ENCODE measurements at regions of chr1 and their contacts with region 1.

Region 1: GRCh38 chr1:160646711-160647328 is at the start of gene SLAMF1:
- DNase-seq: peak; percentile 45 to 74 (median 51)
- H3K4me3 ChIP-seq: peak within 1 kb of the TSS; percentile 80 to 97
- H3K4me3 Mint-ChIP-seq: peak within 1 kb of the TSS; percentile 98 to 100 (median 99)
- H3K27ac ChIP-seq: peak within 1 kb of the TSS; percentile 88
- H3K27ac Mint-ChIP-seq: peak within 1 kb of the TSS; percentile 87 to 98 (median 97)
- H3K4me1 ChIP-seq: peaks cover 55% of the 10 kb centered on the region
- H3K4me1 Mint-ChIP-seq: peaks cover 47 to 94% (median 61%) of the 10 kb centered on the region in 4 donors
- H3K27me3 ChIP-seq: no peaks in the 10 kb centered on the region
- H3K27me3 Mint-ChIP-seq: no peaks in the 10 kb centered on the region
- total RNA-seq, gene SLAMF1: 59.8 to 59.9 TPM

Region 2: DNA sequence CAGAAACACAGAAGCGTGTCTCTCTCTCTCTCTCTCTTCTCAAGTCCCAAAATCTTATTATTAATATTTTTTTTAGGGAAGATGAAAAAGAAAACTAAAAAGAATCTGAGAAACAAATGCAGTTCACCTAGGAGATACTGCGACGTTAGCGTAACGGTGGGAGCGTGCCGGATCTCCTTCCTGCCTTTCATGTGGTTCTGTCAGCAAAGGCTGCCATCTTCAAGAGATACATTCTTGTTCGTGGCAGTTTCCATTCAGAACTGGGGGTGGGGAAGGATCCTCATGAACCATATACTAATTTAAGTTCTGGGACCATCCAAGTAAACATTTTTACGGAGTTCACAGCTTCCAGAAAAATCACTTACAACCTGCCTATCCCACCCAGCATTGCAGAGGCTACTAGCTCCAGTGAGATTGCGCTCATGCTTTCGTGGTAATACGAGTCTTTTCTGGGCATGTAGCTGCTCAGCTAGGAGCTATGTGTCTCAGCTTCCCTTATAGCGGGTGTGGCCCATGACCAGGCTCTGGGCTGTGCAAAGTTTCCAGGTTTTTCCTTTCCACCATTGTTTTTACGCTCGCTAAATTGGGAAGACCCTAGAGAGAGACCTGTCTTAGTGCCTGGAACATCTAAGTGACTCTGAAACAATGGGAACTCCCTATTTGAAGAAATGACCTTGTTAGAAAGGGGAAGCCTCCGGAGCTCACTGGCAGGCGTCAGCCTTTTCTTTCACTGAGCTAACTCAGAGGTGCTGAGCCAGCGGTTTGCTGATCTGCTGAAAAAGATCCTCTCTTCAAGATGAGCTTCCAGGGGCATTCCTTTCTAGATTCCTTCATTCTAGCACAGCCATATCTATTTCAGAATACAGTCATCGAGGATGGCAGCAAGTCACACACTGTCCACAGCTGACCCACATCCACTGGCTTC is 17.3 kb before region 1 on chr1:
- CTCF ChIA-PET with region 1: interaction called, 44 read pairs
- POLR2A ChIA-PET with region 1: interaction called, 135 read pairs
- intact Hi-C with region 1: loop called (anchors 2 kb)
- DNase-seq: peak; percentile 88 to 94 (median 91)
- H3K4me3 ChIP-seq: peak overlapping the region; percentile 18 to 36
- H3K4me3 Mint-ChIP-seq: peak overlapping the region; percentile 80 to 91 (median 84)
- H3K27ac ChIP-seq: peak overlapping the region; percentile 93
- H3K27ac Mint-ChIP-seq: peak overlapping the region; percentile 87 to 100 (median 99)
- H3K4me1 ChIP-seq: peaks cover 98% of the 10 kb centered on the region
- H3K4me1 Mint-ChIP-seq: peaks cover 82 to 100% (median 93%) of the 10 kb centered on the region in 4 donors
- H3K27me3 ChIP-seq: no peaks in the 10 kb centered on the region
- H3K27me3 Mint-ChIP-seq: no peaks in the 10 kb centered on the region

Measured in CD4-positive, alpha-beta memory T cell (primary cell).